H1 (cell line): ENCODE measurements at regions of chr20 and their contacts with region 1.

Region 1: DNA sequence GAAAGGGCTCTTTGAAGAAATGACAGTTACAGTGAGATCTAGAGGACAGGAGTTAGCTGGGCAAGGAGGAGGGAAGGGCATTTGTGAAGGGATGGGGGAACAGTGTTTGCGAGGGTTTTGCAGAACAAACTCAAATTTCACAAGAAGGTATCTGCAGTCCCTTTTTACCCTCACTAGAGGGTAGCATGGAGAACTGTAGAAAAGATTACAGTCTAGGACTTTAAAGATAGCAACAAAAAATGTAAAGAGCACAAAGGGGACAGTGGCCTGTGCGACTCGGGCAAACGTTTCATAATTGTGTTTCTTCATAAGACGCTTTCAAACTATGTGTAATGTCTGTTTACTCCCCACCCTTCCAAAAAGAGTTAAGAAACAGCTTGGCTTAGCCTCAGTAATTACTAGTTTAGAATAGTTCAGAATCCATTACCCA is 21.2 kb upstream of the ASXL1 start:
- DNase-seq: no peak
- H3K4me3 ChIP-seq: no peak overlapping the region
- H3K27ac ChIP-seq: no peak overlapping the region
- H3K4me1 ChIP-seq: no peaks in the 10 kb centered on the region; a peak in 1 of 7 replicates
- H3K27me3 ChIP-seq: no peaks in the 10 kb centered on the region
- CTCF ChIP-seq: peak in 2 of 3 experiments; percentile 28 to 51; a peak in 2 of 4 replicates
- EP300 ChIP-seq: no peak
- POLR2A ChIP-seq: no peak
- RAD21 ChIP-seq: peak; percentile 33 to 50

Region 2: GRCh38 chr20:32352121-32352720 is 15.3 kb after region 1 on chr20:
- CTCF ChIA-PET with region 1: interaction called, 14 read pairs
- POLR2A ChIA-PET with region 1: interaction called, 3 read pairs
- DNase-seq: no peak
- H3K4me3 ChIP-seq: no peak overlapping the region
- H3K27ac ChIP-seq: no peak overlapping the region
- H3K4me1 ChIP-seq: no peaks in the 10 kb centered on the region; a peak in 1 of 7 replicates
- H3K27me3 ChIP-seq: peaks cover 0 to 3% (median 0%) of the 10 kb centered on the region in 4 experiments; a peak in 2 of 7 replicates
- CTCF ChIP-seq: no peak
- EP300 ChIP-seq: no peak
- POLR2A ChIP-seq: no peak
- RAD21 ChIP-seq: no peak

Region 3: DNA sequence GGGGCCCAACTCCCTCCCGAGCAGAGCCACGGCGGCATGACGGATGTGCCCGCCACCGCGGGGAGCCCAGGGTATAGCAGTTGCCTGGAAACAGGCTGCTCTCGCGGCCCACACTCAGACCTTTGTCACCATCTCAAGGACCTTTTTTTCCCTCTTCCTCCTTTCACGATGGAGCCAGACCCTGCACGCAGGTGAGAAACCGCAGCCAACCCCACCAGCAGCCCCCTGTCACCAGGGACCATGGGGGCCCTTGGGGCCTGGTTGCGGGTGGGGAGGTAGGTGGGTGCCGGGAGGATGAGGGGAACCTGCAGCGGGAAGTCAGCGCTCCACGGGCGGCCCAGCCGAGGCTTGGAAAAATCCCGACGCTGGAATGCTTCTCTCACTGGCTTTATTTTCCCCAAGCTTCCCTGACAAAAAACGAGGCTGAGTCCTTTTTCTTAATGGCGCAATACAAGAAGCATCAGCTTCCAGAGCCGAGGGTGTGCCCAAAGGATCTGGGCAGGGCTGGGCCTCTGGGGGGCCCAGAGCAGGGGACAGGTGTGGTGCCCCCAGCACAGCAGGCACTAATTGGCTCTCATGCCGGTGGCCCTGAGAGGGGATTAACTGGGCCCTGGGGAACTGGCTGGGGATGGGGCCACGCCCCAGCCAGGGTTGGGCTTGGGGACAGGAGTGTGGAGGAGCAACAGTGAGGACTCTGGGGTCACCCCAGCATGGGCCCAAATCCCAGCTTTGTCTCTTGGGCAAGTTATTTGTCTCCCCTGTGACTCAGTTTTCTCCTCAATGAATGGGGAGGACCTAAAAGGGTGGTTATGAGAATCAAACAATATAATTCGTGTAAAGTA is 224.3 kb after region 1 on chr20:
- CTCF ChIA-PET with region 1: no interaction called
- POLR2A ChIA-PET with region 1: no interaction called
- DNase-seq: peak in 1 of 2 experiments; percentile 62
- H3K4me3 ChIP-seq: peak overlapping the region in 2 of 4 experiments; percentile 13 to 23; a peak in 3 of 8 replicates
- H3K27ac ChIP-seq: no peak overlapping the region
- H3K4me1 ChIP-seq: peaks cover 3 to 27% (median 14%) of the 10 kb centered on the region in 4 experiments
- H3K27me3 ChIP-seq: no peaks in the 10 kb centered on the region
- CTCF ChIP-seq: no peak
- EP300 ChIP-seq: no peak
- POLR2A ChIP-seq: no peak
- RAD21 ChIP-seq: no peak

Region 4: DNA sequence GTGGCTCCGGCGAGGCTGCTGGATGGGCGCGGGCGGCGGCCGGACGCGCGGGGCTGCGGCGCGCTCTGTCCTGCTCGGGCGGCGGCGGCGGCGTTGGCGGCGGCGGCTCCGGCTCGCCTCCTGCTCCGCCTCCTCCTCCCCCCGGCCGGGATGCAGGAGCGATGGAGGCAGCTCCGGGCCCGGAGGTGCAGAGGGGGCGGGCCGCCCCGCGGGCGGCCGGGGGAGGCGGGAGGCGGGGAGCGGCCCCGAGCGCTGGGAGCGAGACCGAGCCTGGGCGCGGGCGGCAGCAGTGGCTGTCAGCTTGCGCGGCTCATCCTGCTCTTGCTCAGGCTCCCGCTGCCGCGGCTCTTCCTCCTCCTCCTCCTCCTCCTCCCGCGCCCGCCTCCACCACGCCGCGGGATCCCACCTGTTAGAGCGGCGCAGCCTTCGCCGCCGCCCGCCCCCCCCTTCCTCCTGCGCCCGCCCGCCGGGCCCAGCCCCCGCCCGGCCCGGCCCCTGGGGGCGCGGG is 248.1 kb after region 1 on chr20 and contains the start of gene NOL4L:
- CTCF ChIA-PET with region 1: no interaction called
- POLR2A ChIA-PET with region 1: no interaction called
- DNase-seq: peak in 1 of 2 experiments; percentile 69
- H3K4me3 ChIP-seq: peak within 1 kb of the TSS; percentile 52 to 69 (median 61)
- H3K27ac ChIP-seq: no peak within 1 kb of the TSS
- H3K4me1 ChIP-seq: peaks cover 0 to 21% (median 14%) of the 10 kb centered on the region in 4 experiments; a peak in 6 of 7 replicates
- H3K27me3 ChIP-seq: peaks cover 6 to 39% (median 34%) of the 10 kb centered on the region in 4 experiments
- CTCF ChIP-seq: no peak
- EP300 ChIP-seq: no peak
- POLR2A ChIP-seq: no peak
- RAD21 ChIP-seq: no peak
- total RNA-seq, gene NOL4L: 23.5 and 23.7 TPM in 2 replicates